ENCODE measurements at regions of chr7 and their contacts with region 1.

Region 1: DNA sequence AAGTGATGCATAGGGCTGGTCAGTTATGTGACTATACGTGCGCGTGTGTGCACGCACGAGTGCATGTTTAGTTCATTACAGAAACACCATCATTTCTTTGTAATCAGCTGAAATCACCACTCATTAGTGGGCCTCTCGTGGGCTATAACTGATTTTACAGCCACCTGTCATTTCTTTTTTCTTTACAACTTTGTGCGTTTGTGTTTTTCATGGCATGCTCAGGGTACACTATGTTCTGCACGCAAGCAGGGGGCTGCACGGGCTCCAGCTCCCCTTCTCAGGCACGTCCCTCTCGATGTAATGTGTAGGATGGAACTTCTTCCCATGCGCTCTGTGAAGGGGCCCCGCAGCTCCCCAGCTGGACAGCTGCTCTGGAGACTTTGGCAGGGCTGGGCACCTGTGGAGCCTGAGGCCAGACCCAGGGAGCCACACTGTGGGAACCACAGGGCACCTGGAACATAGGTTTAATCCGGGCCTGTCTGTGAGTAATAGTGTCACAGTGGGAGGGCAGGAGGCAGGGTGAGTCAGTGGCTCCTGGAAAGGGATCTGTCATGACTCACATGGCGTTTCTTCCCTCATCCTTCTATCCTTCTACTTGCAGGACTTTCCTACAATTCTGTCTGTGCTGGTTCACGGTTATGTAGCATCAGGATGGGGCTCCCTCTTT is 4.9 kb downstream of the GCK start:
- DNase-seq: no peak
- ATAC-seq: no peak
- H3K4me3 ChIP-seq: no peak overlapping the region
- H3K4me3 Mint-ChIP-seq: no peak overlapping the region
- H3K27ac ChIP-seq: no peak overlapping the region
- H3K27ac Mint-ChIP-seq: no peak overlapping the region
- H3K4me1 ChIP-seq: no peaks in the 10 kb centered on the region
- H3K4me1 Mint-ChIP-seq: no peaks in the 10 kb centered on the region
- H3K27me3 ChIP-seq: no peaks in the 10 kb centered on the region
- H3K27me3 Mint-ChIP-seq: no peaks in the 10 kb centered on the region
- CTCF ChIP-seq: no peak

Region 2: GRCh38 chr7:44200647-44201461 is 16.5 kb after region 1 on chr7 and contains the start of gene YKT6:
- CTCF ChIA-PET with region 1: interaction called, 14 read pairs
- POLR2A ChIA-PET with region 1: no interaction called
- intact Hi-C with region 1: no loop called
- DNase-seq: peak; percentile 84 to 98 (median 95)
- ATAC-seq: peak; percentile 98
- H3K4me3 ChIP-seq: peak within 1 kb of the TSS; percentile 72 to 97
- H3K4me3 Mint-ChIP-seq: peak within 1 kb of the TSS; percentile 81
- H3K27ac ChIP-seq: peak within 1 kb of the TSS; percentile 65 to 78
- H3K27ac Mint-ChIP-seq: peak within 1 kb of the TSS; percentile 80
- H3K4me1 ChIP-seq: peaks cover 13% of the 10 kb centered on the region
- H3K4me1 Mint-ChIP-seq: peaks cover 34% of the 10 kb centered on the region
- H3K27me3 ChIP-seq: no peaks in the 10 kb centered on the region
- H3K27me3 Mint-ChIP-seq: peaks cover 5% of the 10 kb centered on the region
- CTCF ChIP-seq: peak; percentile 43
- total RNA-seq, gene YKT6: 111 to 114 TPM

Region 3: GRCh38 chr7:44267719-44268421 is 83.5 kb after region 1 on chr7:
- CTCF ChIA-PET with region 1: no interaction called
- POLR2A ChIA-PET with region 1: no interaction called
- intact Hi-C with region 1: loop called in 1 of 2 experiments (anchors 5 kb)
- DNase-seq: no peak
- ATAC-seq: no peak
- H3K4me3 ChIP-seq: no peak overlapping the region
- H3K4me3 Mint-ChIP-seq: no peak overlapping the region
- H3K27ac ChIP-seq: no peak overlapping the region
- H3K27ac Mint-ChIP-seq: no peak overlapping the region
- H3K4me1 ChIP-seq: no peaks in the 10 kb centered on the region
- H3K4me1 Mint-ChIP-seq: no peaks in the 10 kb centered on the region
- H3K27me3 ChIP-seq: no peaks in the 10 kb centered on the region
- H3K27me3 Mint-ChIP-seq: no peaks in the 10 kb centered on the region
- CTCF ChIP-seq: no peak

Measured in CD8-positive, alpha-beta T cell (primary cell).